AG04450 (cell line): ENCODE measurements at regions of chr1 and their contacts with region 1.

Region 1: GRCh38 chr1:10415211-10415930 is 14.9 kb upstream of the CENPS start:
- DNase-seq: peak; percentile 76
- H3K4me3 ChIP-seq: no peak overlapping the region
- H3K27ac ChIP-seq: peak overlapping the region; percentile 75
- H3K27me3 ChIP-seq: no peaks in the 10 kb centered on the region
- CTCF ChIP-seq: no peak

Region 2: GRCh38 chr1:10398734-10399623 is 16.4 kb before region 1 on chr1 and contains the start of gene PGD:
- CTCF ChIA-PET with region 1: interaction called, 3 read pairs
- POLR2A ChIA-PET with region 1: interaction called, 10 read pairs
- DNase-seq: peak; percentile 97
- H3K4me3 ChIP-seq: peak within 1 kb of the TSS; percentile 92
- H3K27ac ChIP-seq: peak within 1 kb of the TSS; percentile 91
- H3K27me3 ChIP-seq: no peaks in the 10 kb centered on the region
- CTCF ChIP-seq: no peak
- polyA plus RNA-seq, gene PGD: 155 and 233 TPM in 2 replicates

Region 3: GRCh38 chr1:10555614-10556429 is 140.5 kb after region 1 on chr1:
- CTCF ChIA-PET with region 1: no interaction called
- POLR2A ChIA-PET with region 1: no interaction called
- DNase-seq: no peak
- H3K4me3 ChIP-seq: no peak overlapping the region
- H3K27ac ChIP-seq: no peak overlapping the region
- H3K27me3 ChIP-seq: no peaks in the 10 kb centered on the region
- CTCF ChIP-seq: no peak